Mammary epithelial cell (primary cell): ENCODE measurements at regions of chr15 and their contacts with region 1.

Region 1: DNA sequence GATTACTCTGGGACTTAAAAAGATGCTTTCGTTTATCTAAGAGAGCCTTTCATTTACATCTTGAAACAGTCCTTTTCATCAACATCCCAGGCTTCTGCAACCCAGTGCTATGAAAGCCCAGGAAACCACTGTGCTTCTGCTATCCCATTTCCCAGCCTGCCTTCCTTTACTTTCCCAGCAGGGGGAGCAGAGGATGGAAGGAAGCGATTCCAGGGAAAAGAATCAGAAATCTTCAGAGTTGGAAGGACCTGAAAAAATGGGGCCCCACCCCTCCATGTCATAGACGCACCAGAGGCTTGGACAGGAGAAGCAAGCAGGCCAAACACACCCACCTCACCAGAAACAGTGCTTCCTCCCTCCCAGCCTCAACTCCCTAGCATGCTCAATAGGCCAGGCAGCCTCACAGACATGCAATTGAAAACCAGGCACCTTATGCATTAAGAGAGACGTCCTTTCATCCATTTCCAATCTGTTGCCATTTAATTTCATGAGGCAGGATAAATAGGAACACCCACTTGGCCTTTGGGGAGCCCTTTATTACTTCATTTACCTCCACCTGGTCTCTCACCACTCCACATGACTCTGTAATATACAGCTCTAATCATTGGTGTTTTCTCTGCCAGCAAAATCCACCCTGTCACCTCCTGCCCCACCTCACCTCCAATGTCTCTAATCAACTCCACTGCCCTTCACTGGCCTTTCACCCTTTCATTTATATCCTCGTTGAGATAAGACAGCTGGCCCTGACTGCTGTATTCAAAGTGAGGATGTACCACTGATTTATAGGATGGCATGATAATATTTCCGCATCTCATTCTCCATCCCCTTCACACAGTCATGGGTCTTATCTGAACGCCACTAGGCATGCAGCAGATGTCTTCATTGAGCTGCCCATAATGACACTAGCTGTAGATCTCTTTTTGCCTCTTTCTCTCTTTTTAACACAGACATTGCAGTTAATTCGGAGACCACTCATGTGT is 583.9 kb downstream of the NTRK3 start:
- DNase-seq: peak; percentile 29
- H3K4me3 ChIP-seq: no peak overlapping the region
- H3K27ac ChIP-seq: no peak overlapping the region
- H3K4me1 ChIP-seq: peaks cover 5% of the 10 kb centered on the region
- H3K27me3 ChIP-seq: no peaks in the 10 kb centered on the region
- CTCF ChIP-seq: peak; percentile 74 to 88

Region 2: GRCh38 chr15:86735244-86736040 is 937.2 kb before region 1 on chr15:
- CTCF ChIA-PET with region 1: no interaction called
- dilution Hi-C with region 1: no loop called
- in situ Hi-C with region 1: no loop called
- intact Hi-C with region 1: no loop called
- DNase-seq: no peak
- H3K4me3 ChIP-seq: no peak overlapping the region
- H3K27ac ChIP-seq: no peak overlapping the region
- H3K4me1 ChIP-seq: no peaks in the 10 kb centered on the region
- H3K27me3 ChIP-seq: no peaks in the 10 kb centered on the region
- CTCF ChIP-seq: no peak

Region 3: GRCh38 chr15:87038404-87038803 is 634.2 kb before region 1 on chr15:
- CTCF ChIA-PET with region 1: no interaction called
- dilution Hi-C with region 1: no loop called
- in situ Hi-C with region 1: no loop called
- intact Hi-C with region 1: loop called (anchors 5 kb)
- DNase-seq: no peak
- H3K4me3 ChIP-seq: no peak overlapping the region
- H3K27ac ChIP-seq: no peak overlapping the region
- H3K4me1 ChIP-seq: peaks cover 6% of the 10 kb centered on the region
- H3K27me3 ChIP-seq: no peaks in the 10 kb centered on the region
- CTCF ChIP-seq: no peak